H1 (cell line): ENCODE measurements at regions of chr21 and their contacts with region 1.

Region 1: DNA sequence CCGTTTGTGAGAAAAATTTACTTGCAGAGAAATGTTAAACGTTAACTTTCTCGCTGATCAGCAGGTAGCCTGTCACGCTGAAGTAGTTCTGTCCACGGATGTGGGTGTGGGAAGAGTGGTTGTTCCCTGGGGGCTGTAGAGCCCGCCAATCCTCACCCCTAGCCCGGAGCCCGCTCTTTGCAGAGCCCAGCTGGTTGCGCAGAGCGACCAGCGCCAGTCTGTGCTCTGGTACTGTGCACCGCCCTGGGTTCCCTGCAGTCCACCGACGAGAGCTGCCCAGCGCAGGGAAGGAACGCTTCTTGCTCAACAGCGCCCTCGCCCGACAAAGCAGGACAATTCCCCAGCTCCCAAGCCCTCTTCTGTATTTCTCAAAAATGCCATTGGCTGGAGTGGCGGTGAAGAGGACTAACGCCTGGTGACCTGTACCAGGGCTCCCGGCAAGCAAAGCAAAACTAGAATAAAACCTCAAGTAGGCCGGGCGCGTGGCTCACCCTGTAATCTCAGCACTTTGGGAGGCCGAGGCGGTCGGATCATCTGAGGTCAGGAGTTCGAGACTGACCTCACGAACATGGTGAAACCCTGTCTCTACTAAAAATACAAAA is 3.3 kb downstream of the RIPPLY3 start:
- DNase-seq: peak; percentile 79 to 97
- H3K4me3 ChIP-seq: peak overlapping the region in 2 of 4 experiments; percentile 7 to 38; a peak in 4 of 8 replicates
- H3K27ac ChIP-seq: no peak overlapping the region
- H3K4me1 ChIP-seq: peaks cover 0 to 8% (median 0%) of the 10 kb centered on the region in 4 experiments; a peak in 2 of 7 replicates
- H3K27me3 ChIP-seq: peaks cover 5 to 37% (median 27%) of the 10 kb centered on the region in 4 experiments
- CTCF ChIP-seq: peak; percentile 82 to 97 (median 93)
- EP300 ChIP-seq: no peak
- POLR2A ChIP-seq: no peak
- RAD21 ChIP-seq: peak; percentile 68 to 81

Region 2: DNA sequence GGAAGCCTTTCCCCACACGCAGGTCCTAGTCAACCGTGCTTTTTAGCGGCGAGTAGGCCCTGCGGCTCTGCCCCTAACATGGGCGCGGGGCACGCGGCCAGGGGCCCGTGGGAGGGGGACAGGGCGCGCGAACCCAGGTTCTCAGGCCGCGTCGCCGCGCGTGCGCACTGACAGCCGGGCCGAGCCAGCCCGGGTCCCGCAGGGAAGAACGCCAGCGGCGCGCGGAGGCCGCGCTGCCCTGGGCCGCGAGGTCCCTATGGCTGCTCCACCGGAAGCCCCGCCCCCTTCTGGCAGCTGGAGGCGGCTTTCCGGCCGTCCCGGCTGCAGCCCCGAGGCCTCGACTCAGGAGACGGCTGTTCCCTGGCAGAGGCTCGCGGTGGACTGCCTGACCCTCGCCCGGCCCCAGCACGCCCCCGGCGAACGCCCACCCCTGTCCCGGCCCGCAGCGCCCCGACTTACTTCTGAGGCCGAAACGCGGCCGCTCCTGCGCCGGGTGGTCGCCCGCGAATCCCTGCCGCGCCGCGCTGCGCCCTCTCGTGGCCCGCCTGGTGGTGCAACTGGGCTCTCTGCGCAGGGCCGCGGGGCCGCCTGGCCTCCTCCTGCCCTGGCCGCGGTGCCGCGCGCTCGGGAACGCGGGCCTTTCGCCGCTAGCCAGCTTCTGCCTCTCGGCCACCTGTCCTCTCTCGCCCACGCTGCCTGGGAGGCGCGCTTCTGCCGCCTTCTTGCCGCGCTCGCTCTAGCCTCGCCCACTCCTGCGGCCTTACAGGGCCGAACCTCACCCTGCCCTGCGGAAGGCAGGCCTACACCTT is 19.9 kb before region 1 on chr21:
- CTCF ChIA-PET with region 1: interaction called, 10 read pairs
- POLR2A ChIA-PET with region 1: interaction called, 14 read pairs
- DNase-seq: peak; percentile 57 to 99
- H3K4me3 ChIP-seq: peak overlapping the region; percentile 46 to 70 (median 52)
- H3K27ac ChIP-seq: peak overlapping the region; percentile 70
- H3K4me1 ChIP-seq: peaks cover 3 to 16% (median 6%) of the 10 kb centered on the region in 4 experiments
- H3K27me3 ChIP-seq: peaks cover 0 to 3% (median 0%) of the 10 kb centered on the region in 4 experiments; a peak in 1 of 7 replicates
- CTCF ChIP-seq: peak; percentile 80 to 93 (median 82)
- EP300 ChIP-seq: no peak
- POLR2A ChIP-seq: peak; percentile 49 to 64; a peak in 2 of 3 replicates
- RAD21 ChIP-seq: peak; percentile 29 to 53; a peak in 3 of 4 replicates

Region 3: DNA sequence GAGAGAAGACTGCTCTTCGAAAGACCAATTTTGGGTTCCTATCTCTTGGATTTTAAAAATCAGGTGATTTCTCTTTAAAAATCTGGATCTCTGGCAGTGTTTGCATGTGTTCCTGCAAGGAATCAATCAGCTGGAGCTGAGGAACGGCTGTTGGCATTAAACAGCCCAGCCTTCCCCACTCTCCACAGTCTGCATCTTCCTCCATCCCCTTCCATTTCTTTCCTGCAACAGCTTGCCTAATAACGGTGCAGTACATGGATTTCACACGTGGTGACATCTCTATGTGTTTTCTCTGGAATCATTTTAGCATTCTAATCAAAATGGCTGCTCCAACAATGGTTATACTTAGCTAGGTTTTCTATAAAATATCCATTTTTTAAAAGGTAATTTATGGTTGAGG is 16.7 kb after region 1 on chr21:
- CTCF ChIA-PET with region 1: interaction called, 22 read pairs
- POLR2A ChIA-PET with region 1: no interaction called
- DNase-seq: no peak
- H3K4me3 ChIP-seq: no peak overlapping the region
- H3K27ac ChIP-seq: no peak overlapping the region
- H3K4me1 ChIP-seq: no peaks in the 10 kb centered on the region
- H3K27me3 ChIP-seq: no peaks in the 10 kb centered on the region
- CTCF ChIP-seq: no peak
- EP300 ChIP-seq: no peak
- POLR2A ChIP-seq: no peak
- RAD21 ChIP-seq: no peak

Region 4: GRCh38 chr21:37065381-37066177 is 55.7 kb after region 1 on chr21:
- CTCF ChIA-PET with region 1: interaction called, 15 read pairs
- POLR2A ChIA-PET with region 1: interaction called, 3 read pairs
- DNase-seq: no peak
- H3K4me3 ChIP-seq: no peak overlapping the region
- H3K27ac ChIP-seq: no peak overlapping the region
- H3K4me1 ChIP-seq: peaks cover 0 to 6% (median 1%) of the 10 kb centered on the region in 4 experiments; a peak in 3 of 7 replicates
- H3K27me3 ChIP-seq: no peaks in the 10 kb centered on the region
- CTCF ChIP-seq: no peak
- EP300 ChIP-seq: no peak
- POLR2A ChIP-seq: no peak
- RAD21 ChIP-seq: no peak